A673 (cell line): ENCODE measurements at regions of chr18 and their contacts with region 1.

Region 1: DNA sequence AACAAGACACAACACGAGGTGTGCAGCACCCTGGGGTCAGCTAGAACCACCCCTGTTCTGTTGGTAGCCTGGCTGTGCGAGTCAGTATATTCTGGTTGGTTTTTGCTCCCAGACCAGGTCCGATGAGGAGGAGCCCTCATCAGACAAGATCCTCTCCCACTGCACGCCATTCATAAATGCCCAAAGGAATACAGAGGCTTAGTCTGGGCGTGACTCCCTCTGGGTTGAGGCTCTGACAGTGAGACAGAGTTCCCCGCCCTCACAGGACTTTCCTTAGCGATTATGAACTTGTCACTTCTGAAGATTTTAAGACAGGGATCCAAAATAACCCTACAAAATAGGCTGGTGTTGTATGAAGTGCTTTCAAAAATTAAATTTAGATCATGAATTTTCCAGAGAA is 85.5 kb upstream of the MC2R start:
- DNase-seq: no peak
- H3K4me3 ChIP-seq: no peak overlapping the region
- H3K27ac ChIP-seq: no peak overlapping the region
- H3K4me1 ChIP-seq: no peaks in the 10 kb centered on the region
- H3K27me3 ChIP-seq: no peaks in the 10 kb centered on the region
- CTCF ChIP-seq: no peak

Region 2: GRCh38 chr18:13940326-13940725 is 60.6 kb before region 1 on chr18:
- CTCF ChIA-PET with region 1: no interaction called
- POLR2A ChIA-PET with region 1: no interaction called
- intact Hi-C with region 1: loop called (anchors 10 kb)
- DNase-seq: no peak
- H3K4me3 ChIP-seq: no peak overlapping the region
- H3K27ac ChIP-seq: no peak overlapping the region
- H3K4me1 ChIP-seq: no peaks in the 10 kb centered on the region
- H3K27me3 ChIP-seq: no peaks in the 10 kb centered on the region
- CTCF ChIP-seq: no peak